T-cell (primary cell): ENCODE measurements at regions of chr10 and their contacts with region 1.

Region 1: GRCh38 chr10:96577069-96577468 is 9.7 kb downstream of the TM9SF3 start:
- DNase-seq: no peak
- ATAC-seq: no peak
- H3K4me3 ChIP-seq: no peak overlapping the region
- H3K4me3 Mint-ChIP-seq: no peak overlapping the region
- H3K27ac ChIP-seq: no peak overlapping the region
- H3K27ac Mint-ChIP-seq: no peak overlapping the region
- H3K4me1 ChIP-seq: peaks cover 7 to 8% of the 10 kb centered on the region in 2 experiments
- H3K4me1 Mint-ChIP-seq: peaks cover 78 to 90% (median 83%) of the 10 kb centered on the region in 3 donors
- H3K27me3 ChIP-seq: no peaks in the 10 kb centered on the region
- H3K27me3 Mint-ChIP-seq: no peaks in the 10 kb centered on the region

Region 2: DNA sequence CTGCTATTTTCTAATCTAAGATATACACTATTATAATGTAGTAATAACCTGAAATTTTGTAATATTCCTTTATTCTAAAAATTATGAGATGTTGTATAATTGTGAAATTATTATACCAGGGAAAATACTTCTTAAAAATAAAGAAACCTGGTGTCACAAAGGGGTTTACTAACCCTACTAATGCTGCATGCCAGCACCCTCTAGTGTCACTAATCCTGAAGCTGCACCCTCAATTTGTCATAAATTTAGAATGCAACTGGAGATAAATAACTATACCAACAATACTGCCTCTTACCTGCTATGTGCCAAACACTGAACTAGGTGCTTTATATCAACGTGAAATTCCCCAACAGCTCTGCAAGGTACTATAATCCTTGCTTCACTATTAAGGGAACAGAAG is 21.1 kb before region 1 on chr10:
- CTCF ChIA-PET with region 1: interaction called in 1 of 2 experiments, 3 read pairs
- POLR2A ChIA-PET with region 1: interaction called in 1 of 2 experiments, 11 read pairs
- DNase-seq: peak in 1 of 35 experiments; percentile 21
- ATAC-seq: no peak
- H3K4me3 ChIP-seq: no peak overlapping the region
- H3K4me3 Mint-ChIP-seq: no peak overlapping the region
- H3K27ac ChIP-seq: no peak overlapping the region
- H3K27ac Mint-ChIP-seq: no peak overlapping the region
- H3K4me1 ChIP-seq: no peaks in the 10 kb centered on the region
- H3K4me1 Mint-ChIP-seq: peaks cover 0 to 3% (median 2%) of the 10 kb centered on the region in 3 donors
- H3K27me3 ChIP-seq: no peaks in the 10 kb centered on the region
- H3K27me3 Mint-ChIP-seq: no peaks in the 10 kb centered on the region

Region 3: DNA sequence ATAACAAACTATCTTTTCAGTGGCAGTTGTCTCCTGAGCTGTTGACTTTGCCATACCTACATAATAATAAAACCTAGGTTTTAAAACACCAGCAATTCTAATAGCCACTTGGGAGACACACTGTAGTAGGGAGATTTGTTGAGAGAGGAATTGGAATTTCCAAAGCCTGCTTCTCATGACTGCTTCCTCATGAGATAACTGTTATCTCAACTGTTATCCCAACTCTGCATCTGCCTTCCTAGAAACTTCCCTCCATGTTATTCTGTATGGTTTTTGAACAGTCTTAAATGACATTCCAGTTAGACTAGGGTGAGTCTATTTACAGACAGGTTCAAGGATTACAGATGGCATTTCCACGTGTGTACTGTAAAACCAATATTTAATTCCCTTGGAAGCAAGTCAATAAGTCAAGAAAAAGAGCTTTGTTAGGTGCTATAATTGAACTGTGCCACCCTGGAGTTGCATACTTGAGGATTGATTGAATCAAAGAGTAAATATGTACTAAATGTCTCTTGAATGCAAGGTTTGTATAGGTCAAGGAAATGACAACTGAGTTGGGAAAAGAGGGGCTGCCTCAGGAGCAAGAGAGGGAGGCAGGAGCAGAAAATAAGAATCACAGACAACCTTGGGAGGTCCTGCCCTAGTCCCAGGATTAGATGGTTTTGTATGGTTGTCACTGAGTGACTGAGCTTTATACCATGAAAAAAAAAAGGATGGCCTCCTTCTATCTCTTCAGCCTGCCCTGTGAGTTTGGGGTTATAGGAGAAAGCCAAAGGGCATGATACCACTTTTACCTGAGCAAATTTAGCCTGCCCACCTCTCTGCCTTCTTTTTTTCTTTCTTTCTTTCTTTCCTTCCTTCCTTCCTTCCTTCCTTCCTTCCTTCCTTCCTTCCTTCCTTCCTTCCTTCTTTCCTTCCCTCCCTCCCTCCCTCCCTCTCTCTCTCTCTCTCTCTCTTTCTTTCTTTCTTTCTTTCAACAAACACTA is 19.6 kb after region 1 on chr10:
- CTCF ChIA-PET with region 1: no interaction called
- POLR2A ChIA-PET with region 1: no interaction called
- DNase-seq: no peak
- ATAC-seq: no peak
- H3K4me3 ChIP-seq: no peak overlapping the region
- H3K4me3 Mint-ChIP-seq: no peak overlapping the region
- H3K27ac ChIP-seq: no peak overlapping the region
- H3K27ac Mint-ChIP-seq: no peak overlapping the region
- H3K4me1 ChIP-seq: peaks cover 0 to 4% of the 10 kb centered on the region in 2 experiments
- H3K4me1 Mint-ChIP-seq: peaks cover 4 to 7% (median 4%) of the 10 kb centered on the region in 3 donors
- H3K27me3 ChIP-seq: no peaks in the 10 kb centered on the region
- H3K27me3 Mint-ChIP-seq: peaks cover 0 to under 1% of the 10 kb centered on the region in 2 donors